Dendritic cell treated with granulocyte-macrophage colony-stimulating factor and Interleukin-4, amounts not matched to agents 40 ng/mL and 50 ng/mL, for 4 days (primary cell): ENCODE measurements at regions of chr1 and their contacts with region 1.

Region 1: GRCh38 chr1:248858891-248859889 is at the start of gene ZNF692:
- H3K4me3 Mint-ChIP-seq: peak within 1 kb of the TSS; percentile 86
- H3K27ac Mint-ChIP-seq: peak within 1 kb of the TSS; percentile 95
- H3K4me1 Mint-ChIP-seq: peaks cover 67% of the 10 kb centered on the region
- H3K27me3 Mint-ChIP-seq: no peaks in the 10 kb centered on the region

Region 2: DNA sequence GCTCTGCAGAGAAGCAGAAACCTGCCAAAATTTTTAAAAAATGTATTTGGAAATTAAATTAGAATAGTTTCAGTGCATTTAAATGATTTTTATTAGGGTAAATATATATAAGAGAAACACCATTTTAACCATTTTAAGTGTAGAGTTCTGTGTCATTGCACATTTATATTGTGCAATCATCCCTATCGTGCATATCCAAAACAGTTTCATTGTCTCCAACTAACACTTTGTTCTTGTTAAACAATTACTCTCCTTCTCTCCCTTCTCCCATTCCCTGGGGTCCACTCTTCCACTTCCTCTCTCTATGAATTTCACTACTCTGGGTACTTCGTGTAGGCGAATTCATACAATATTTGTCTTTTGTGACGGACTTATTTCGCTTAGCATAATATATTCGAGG is 916.6 kb before region 1 on chr1:
- intact Hi-C with region 1: no loop called
- H3K4me3 Mint-ChIP-seq: no peak overlapping the region
- H3K27ac Mint-ChIP-seq: no peak overlapping the region
- H3K4me1 Mint-ChIP-seq: peaks cover 9% of the 10 kb centered on the region
- H3K27me3 Mint-ChIP-seq: no peaks in the 10 kb centered on the region

Region 3: DNA sequence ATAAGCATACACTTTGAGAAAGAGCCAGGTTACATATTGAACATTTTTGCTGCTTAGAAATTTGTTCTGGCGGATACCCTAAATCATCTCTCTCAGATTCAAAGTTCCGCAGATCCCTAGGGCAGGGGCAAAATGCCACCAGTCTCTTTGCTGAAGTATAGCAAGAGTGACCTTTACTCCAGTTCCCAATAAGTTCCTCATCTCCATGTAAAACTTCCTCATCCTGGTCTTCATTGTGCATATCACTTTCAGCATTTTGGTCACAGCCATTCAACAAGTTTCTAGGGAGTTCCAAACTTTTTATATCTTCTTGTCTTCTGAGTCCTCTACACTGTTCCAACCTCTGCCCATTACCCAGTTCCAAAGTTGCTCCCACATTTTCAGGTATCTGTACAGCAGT is 80.3 kb before region 1 on chr1:
- intact Hi-C with region 1: no loop called
- H3K4me3 Mint-ChIP-seq: no peak overlapping the region
- H3K27ac Mint-ChIP-seq: no peak overlapping the region
- H3K4me1 Mint-ChIP-seq: peaks cover 22% of the 10 kb centered on the region
- H3K27me3 Mint-ChIP-seq: peaks cover 2% of the 10 kb centered on the region

Region 4: GRCh38 chr1:248873409-248873992 is 14.3 kb after region 1 on chr1:
- intact Hi-C with region 1: loop called (anchors 1 kb)
- H3K4me3 Mint-ChIP-seq: peak overlapping the region; percentile 82
- H3K27ac Mint-ChIP-seq: peak overlapping the region; percentile 89
- H3K4me1 Mint-ChIP-seq: peaks cover 18% of the 10 kb centered on the region
- H3K27me3 Mint-ChIP-seq: no peaks in the 10 kb centered on the region

Region 5: DNA sequence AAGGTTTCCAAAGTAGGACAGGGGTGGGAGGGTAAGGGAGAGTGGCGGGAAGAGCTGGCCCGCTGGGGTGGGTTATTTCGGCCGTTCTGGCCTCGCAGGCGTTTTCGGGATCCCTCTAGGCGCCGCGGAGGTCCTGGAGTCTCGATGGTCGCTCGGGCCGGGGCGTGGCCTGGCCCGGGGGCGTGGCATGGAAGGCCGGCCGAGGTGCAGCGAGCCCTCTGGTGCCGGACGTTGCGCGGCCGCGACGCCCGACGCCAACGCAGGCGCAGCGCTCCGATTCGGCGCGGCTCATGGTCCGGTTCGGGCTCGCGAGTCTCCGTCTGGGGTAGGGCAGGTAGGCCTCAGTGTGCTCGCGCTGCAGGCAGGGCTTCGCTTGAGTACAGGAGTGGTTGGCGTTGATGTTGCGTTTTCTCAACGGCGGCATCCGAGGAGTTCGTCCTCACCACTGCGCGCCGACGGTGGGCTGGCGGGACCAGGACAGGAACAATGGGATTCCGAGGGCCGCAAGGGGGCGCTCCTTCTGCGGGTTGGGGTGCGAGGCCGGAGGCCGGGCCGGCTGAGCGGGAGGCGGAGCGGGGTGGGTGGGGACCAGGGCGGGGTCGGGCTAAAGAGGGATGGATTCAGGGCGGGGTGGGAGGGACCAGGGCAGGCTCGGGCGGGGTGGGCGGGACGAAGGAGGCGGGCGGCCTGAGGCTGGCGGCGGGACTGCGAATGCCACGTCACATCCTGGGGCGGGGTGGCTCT is 47.0 kb after region 1 on chr1 and contains the start of gene PGBD2:
- intact Hi-C with region 1: loop called (anchors 2 kb)
- H3K4me3 Mint-ChIP-seq: peak within 1 kb of the TSS; percentile 93
- H3K27ac Mint-ChIP-seq: peak within 1 kb of the TSS; percentile 96
- H3K4me1 Mint-ChIP-seq: peaks cover 33% of the 10 kb centered on the region
- H3K27me3 Mint-ChIP-seq: peaks cover 2% of the 10 kb centered on the region